GM12878 (cell line): ENCODE measurements at regions of chr10 and their contacts with region 1.

Region 1: GRCh38 chr10:64271983-64272382 is 750.8 kb downstream of the REEP3 start:
- DNase-seq: no peak
- ATAC-seq: 0 out of 3 replicates have a peak, but pooled peaks have one; percentile 13
- H3K4me3 ChIP-seq: no peak overlapping the region
- H3K27ac ChIP-seq: no peak overlapping the region
- H3K4me1 ChIP-seq: no peaks in the 10 kb centered on the region
- H3K27me3 ChIP-seq: no peaks in the 10 kb centered on the region
- CTCF ChIP-seq: no peak
- EP300 ChIP-seq: no peak
- POLR2A ChIP-seq: no peak
- RAD21 ChIP-seq: no peak

Region 2: DNA sequence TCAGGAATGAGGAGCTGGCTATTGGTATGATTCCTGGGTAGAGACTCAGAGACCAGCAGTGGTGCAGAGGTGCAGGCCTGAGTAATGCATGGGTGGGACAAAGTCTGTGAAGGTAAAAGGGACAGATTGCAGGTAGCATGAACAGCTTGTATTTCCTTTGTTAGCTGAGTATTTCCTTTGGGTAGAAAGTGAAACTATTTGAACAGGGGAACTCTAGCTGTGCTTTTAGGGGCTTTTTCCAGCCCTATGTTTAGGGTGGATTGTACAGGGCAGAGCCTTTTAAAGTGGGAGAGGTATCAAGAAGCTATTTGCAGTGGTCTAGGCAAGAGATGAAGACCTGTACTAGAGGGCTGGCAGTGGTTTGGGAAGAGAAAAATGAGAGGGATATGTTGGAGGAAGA is 10.9 kb before region 1 on chr10:
- CTCF ChIA-PET with region 1: interaction called, 9 read pairs
- POLR2A ChIA-PET with region 1: interaction called, 5 read pairs
- RAD21 ChIA-PET with region 1: interaction called, 12 read pairs
- SMC1A ChIA-PET with region 1: interaction called, 9 read pairs
- in situ Hi-C with region 1: no loop called
- intact Hi-C with region 1: no loop called
- DNase-seq: peak; percentile 12
- ATAC-seq: peak; percentile 93
- H3K4me3 ChIP-seq: no peak overlapping the region
- H3K27ac ChIP-seq: peak overlapping the region; percentile 27
- H3K4me1 ChIP-seq: no peaks in the 10 kb centered on the region
- H3K27me3 ChIP-seq: no peaks in the 10 kb centered on the region
- CTCF ChIP-seq: no peak
- EP300 ChIP-seq: no peak
- POLR2A ChIP-seq: no peak
- RAD21 ChIP-seq: no peak